Endothelial cell of umbilical vein (primary cell): ENCODE measurements at regions of chr3 and their contacts with region 1.

Region 1: GRCh38 chr3:50350527-50351322 is at the starts of genes CYB561D2 and NPRL2:
- DNase-seq: peak; percentile 95
- H3K4me3 ChIP-seq: peak within 1 kb of the TSS; percentile 19 to 77 (median 40)
- H3K27ac ChIP-seq: no peak within 1 kb of the TSS
- H3K4me1 ChIP-seq: peaks cover 16% of the 10 kb centered on the region
- H3K27me3 ChIP-seq: no peaks in the 10 kb centered on the region
- CTCF ChIP-seq: no peak
- POLR2A ChIP-seq: peak; percentile 80
- total RNA-seq, gene CYB561D2: 13.6 and 16.3 TPM in 2 replicates
- total RNA-seq, gene NPRL2: 13.4 and 14.5 TPM in 2 replicates

Region 2: DNA sequence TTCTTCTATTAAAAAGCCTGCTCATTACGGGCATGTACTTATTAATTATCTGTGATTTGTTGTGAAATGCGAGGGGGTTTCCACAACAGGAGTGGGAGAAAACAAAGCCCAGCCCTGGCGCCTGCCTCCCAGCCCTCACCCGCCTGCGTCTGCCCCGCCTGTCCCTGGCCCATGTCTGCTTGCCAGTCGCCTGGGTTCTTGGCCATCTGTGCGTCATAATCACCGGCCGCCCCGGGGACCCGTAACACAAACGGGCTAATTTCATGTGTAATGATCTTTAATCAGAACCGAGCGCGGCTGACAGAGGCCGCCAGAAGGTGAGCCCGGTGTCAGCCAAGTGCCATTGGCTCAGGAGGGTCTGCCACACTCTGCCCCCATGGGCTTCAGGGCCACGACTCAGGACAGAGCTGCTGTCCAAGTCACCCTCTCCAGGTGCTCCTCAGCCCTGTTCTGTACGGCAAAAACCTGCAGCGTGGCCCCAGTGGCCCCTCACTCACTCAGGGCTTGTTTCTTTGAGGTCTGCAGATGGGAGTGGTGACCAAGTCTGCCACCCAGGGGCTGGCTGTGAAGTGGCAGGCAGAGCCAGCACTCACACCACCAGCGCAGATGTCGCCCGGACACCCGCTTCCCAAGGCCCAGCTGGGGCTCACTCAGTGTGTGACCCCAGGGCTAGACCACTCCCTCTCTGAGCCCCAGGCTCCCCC is 37.4 kb after region 1 on chr3:
- CTCF ChIA-PET with region 1: interaction called, 4 read pairs
- POLR2A ChIA-PET with region 1: no interaction called
- dilution Hi-C with region 1: no loop called
- intact Hi-C with region 1: loop called (anchors 1 kb)
- DNase-seq: no peak
- H3K4me3 ChIP-seq: no peak overlapping the region
- H3K27ac ChIP-seq: no peak overlapping the region
- H3K4me1 ChIP-seq: no peaks in the 10 kb centered on the region
- H3K27me3 ChIP-seq: no peaks in the 10 kb centered on the region
- CTCF ChIP-seq: peak; percentile 4 to 34
- POLR2A ChIP-seq: no peak

Region 3: GRCh38 chr3:50436114-50436674 is 85.5 kb after region 1 on chr3:
- CTCF ChIA-PET with region 1: no interaction called
- POLR2A ChIA-PET with region 1: no interaction called
- dilution Hi-C with region 1: no loop called
- intact Hi-C with region 1: loop called (anchors 5 kb)
- DNase-seq: peak; percentile 42
- H3K4me3 ChIP-seq: no peak overlapping the region
- H3K27ac ChIP-seq: no peak overlapping the region
- H3K4me1 ChIP-seq: no peaks in the 10 kb centered on the region
- H3K27me3 ChIP-seq: no peaks in the 10 kb centered on the region
- CTCF ChIP-seq: peak; percentile 80 to 89
- POLR2A ChIP-seq: no peak